ENCODE measurements at regions of chr10 and their contacts with region 1.

Region 1: DNA sequence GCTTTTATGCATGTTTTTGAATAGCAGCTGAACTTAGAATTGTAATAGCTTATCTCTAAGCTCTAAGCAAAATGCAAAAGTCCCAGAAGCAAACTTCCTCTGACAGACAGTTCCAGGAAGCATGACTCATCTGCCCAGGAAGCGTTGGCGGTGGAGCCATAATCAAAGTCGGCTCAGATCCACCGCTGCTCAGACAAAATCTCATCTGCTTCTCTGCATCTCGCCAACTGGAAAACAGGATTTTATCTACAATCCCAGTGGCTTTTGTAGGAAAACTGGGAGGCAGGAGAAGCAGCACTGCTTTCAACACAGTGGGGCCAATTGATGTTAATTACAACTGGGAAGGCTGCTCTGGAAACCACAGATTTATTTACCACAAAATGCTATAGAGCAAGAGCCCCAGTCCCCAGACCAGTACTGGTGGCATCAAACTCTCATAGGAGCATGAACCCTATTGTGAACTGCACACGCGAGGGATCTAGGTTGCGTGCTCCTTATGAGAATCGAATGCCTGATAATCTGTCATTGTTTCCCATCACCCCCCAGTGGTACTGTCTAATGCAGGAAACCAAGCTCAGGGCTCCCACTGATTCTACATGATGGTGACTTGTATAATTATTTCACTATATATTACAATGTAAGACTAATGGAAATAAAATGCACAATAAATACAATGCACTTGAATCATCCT is 99.9 kb downstream of the CUBN start:
- DNase-seq: peak; percentile 60 to 89
- ATAC-seq: peak; percentile 43 to 69 (median 61)
- H3K4me3 ChIP-seq: peak overlapping the region; percentile 22
- H3K4me3 Mint-ChIP-seq: peak overlapping the region; percentile 83
- H3K27ac ChIP-seq: peak overlapping the region; percentile 87
- H3K27ac Mint-ChIP-seq: peak overlapping the region; percentile 97
- H3K4me1 ChIP-seq: peaks cover 51% of the 10 kb centered on the region
- H3K4me1 Mint-ChIP-seq: peaks cover 68 to 74% of the 10 kb centered on the region in 2 donors
- H3K27me3 ChIP-seq: no peaks in the 10 kb centered on the region
- H3K27me3 Mint-ChIP-seq: no peaks in the 10 kb centered on the region
- CTCF ChIP-seq: no peak

Region 2: DNA sequence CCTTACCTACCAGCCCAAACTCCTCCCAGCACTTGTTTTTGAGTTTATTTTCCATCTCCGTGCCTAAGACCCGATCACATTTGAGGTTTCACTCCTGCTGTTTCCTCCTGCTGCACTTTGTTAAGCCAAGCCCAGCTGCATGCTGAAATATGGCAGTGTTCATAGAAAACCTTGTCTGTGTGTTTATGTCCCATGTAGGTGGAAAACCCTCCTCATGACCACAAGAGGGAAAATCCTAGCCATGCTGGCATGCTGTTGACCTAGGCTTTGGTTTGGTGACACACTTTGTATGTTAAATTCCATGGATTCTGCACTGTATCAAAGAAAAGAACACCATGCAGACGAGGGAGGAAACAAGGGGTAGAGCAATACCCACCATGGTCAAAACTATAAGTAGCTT is 54.5 kb before region 1 on chr10:
- intact Hi-C with region 1: no loop called
- DNase-seq: no peak
- ATAC-seq: no peak
- H3K4me3 ChIP-seq: no peak overlapping the region
- H3K4me3 Mint-ChIP-seq: no peak overlapping the region
- H3K27ac ChIP-seq: no peak overlapping the region
- H3K27ac Mint-ChIP-seq: no peak overlapping the region
- H3K4me1 ChIP-seq: no peaks in the 10 kb centered on the region
- H3K4me1 Mint-ChIP-seq: no peaks in the 10 kb centered on the region
- H3K27me3 ChIP-seq: no peaks in the 10 kb centered on the region
- H3K27me3 Mint-ChIP-seq: no peaks in the 10 kb centered on the region
- CTCF ChIP-seq: no peak

Region 3: GRCh38 chr10:16995867-16996529 is 33.7 kb before region 1 on chr10:
- intact Hi-C with region 1: loop called (anchors 5 kb)
- DNase-seq: peak in 1 of 2 donors; percentile 50
- ATAC-seq: peak; percentile 62 to 73 (median 64)
- H3K4me3 ChIP-seq: no peak overlapping the region
- H3K4me3 Mint-ChIP-seq: no peak overlapping the region
- H3K27ac ChIP-seq: no peak overlapping the region
- H3K27ac Mint-ChIP-seq: peak overlapping the region in 1 of 2 donors; percentile 51
- H3K4me1 ChIP-seq: no peaks in the 10 kb centered on the region
- H3K4me1 Mint-ChIP-seq: peaks cover 8 to 9% of the 10 kb centered on the region in 2 donors
- H3K27me3 ChIP-seq: no peaks in the 10 kb centered on the region
- H3K27me3 Mint-ChIP-seq: peaks cover 48 to 53% of the 10 kb centered on the region in 2 donors
- CTCF ChIP-seq: no peak

Measured in natural killer cell (primary cell).